WTC11 (cell line): ENCODE measurements at regions of chr14 and their contacts with region 1.

Region 1: DNA sequence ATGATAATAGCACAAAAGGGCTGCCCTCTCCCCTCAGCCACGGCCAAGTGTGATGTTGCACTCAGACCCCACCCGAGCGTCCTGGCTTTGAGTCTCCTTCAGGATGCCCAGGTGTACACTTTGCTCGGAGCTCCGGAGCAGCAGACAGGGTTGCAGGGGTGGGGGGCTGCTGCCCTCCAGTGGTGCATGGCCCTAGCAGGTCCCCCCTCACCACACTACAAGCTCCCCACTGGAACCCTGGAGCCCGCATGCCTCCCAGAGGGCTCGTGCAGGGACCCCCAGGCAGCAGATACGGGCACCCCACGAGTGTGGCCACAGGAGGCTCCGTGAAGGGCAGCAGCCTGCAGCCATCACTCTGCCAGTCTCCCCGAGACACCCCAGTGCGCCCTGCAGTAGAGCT is 69.9 kb upstream of the C14orf180 start:
- DNase-seq: no peak
- ATAC-seq: peak; percentile 65
- H3K4me3 Mint-ChIP-seq: no peak overlapping the region
- H3K27ac Mint-ChIP-seq: no peak overlapping the region
- H3K4me1 Mint-ChIP-seq: peaks cover 2% of the 10 kb centered on the region
- H3K27me3 Mint-ChIP-seq: no peaks in the 10 kb centered on the region; the same call in 1 of the 2 replicates
- CTCF ChIP-seq: no peak

Region 2: GRCh38 chr14:104370256-104370870 is 139.3 kb before region 1 on chr14:
- CTCF ChIA-PET with region 1: interaction called, 15 read pairs
- POLR2A ChIA-PET with region 1: no interaction called
- DNase-seq: peak; percentile 66
- ATAC-seq: peak; percentile 82
- H3K4me3 Mint-ChIP-seq: no peak overlapping the region
- H3K27ac Mint-ChIP-seq: no peak overlapping the region
- H3K4me1 Mint-ChIP-seq: peaks cover 4% of the 10 kb centered on the region; the same call in 1 of the 2 replicates
- H3K27me3 Mint-ChIP-seq: no peaks in the 10 kb centered on the region; the same call in 1 of the 2 replicates
- CTCF ChIP-seq: no peak